ENCODE measurements at regions of chr11 and their contacts with region 1.

Region 1: GRCh38 chr11:102451681-102452460 is 694 bp downstream of the TMEM123 start:
- DNase-seq: peak; percentile 78 to 82 (median 82)
- H3K4me3 ChIP-seq: peak overlapping the region; percentile 83 to 94
- H3K4me3 Mint-ChIP-seq: peak overlapping the region; percentile 89 to 99 (median 98)
- H3K27ac ChIP-seq: peak overlapping the region; percentile 86
- H3K27ac Mint-ChIP-seq: peak overlapping the region; percentile 94 to 98 (median 97)
- H3K4me1 ChIP-seq: peaks cover 70% of the 10 kb centered on the region
- H3K4me1 Mint-ChIP-seq: peaks cover 63 to 93% (median 76%) of the 10 kb centered on the region in 4 donors
- H3K27me3 ChIP-seq: no peaks in the 10 kb centered on the region
- H3K27me3 Mint-ChIP-seq: no peaks in the 10 kb centered on the region

Region 2: DNA sequence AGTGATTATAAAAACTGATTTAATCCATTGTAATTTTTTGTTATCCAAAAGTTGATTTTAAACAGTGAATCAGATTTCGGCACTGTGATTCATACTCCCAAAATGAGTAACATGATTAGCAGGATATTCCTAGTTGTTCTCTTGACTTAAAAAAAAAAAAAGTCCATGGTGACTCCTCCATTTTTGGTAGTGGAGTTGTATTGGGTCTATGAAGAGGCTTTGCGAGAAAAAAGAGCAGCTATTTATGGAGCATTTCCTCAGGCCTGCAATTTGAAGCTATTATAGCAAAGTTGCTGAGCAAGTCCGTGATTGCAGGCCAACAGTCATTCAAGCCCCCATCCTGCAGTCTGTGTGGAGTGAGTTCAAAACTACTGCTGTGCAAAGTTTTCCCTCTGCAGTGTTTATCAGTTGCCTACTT is 312.8 kb before region 1 on chr11:
- CTCF ChIA-PET with region 1: no interaction called
- POLR2A ChIA-PET with region 1: no interaction called
- intact Hi-C with region 1: no loop called
- DNase-seq: no peak
- H3K4me3 ChIP-seq: no peak overlapping the region
- H3K4me3 Mint-ChIP-seq: no peak overlapping the region
- H3K27ac ChIP-seq: no peak overlapping the region
- H3K27ac Mint-ChIP-seq: no peak overlapping the region
- H3K4me1 ChIP-seq: no peaks in the 10 kb centered on the region
- H3K4me1 Mint-ChIP-seq: no peaks in the 10 kb centered on the region
- H3K27me3 ChIP-seq: no peaks in the 10 kb centered on the region
- H3K27me3 Mint-ChIP-seq: peaks cover 4 to 15% of the 10 kb centered on the region in 2 donors

Region 3: DNA sequence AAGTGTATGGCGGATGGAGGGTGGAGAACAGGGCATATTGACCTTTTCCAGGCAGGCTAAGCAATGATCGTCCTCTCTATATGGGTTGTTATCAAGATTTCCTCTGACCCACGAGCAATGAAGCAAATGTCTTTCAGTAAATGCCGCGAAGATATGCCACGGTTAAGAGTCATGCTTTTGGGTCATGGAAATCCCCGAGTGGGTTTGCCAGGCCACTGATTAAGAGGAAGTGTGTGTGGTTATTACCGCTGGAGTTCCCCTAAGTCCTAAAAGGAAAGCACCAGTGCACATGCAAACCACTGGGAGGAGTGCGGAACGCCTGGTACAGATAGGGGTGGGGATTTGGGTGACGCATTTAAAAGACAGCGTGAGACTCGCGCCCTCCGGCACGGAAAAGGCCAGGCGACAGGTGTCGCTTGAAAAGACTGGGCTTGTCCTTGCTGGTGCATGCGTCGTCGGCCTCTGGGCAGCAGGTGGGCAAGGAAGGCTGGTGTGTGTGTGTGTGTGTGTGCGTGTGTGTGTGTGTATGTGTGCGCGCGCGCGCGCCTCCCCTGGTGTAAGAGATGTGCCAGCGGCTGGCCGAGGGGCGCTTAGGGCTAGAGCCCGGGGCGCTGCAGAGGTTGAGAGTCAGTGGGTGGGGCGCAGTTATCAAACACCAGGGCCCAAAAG is 134.6 kb before region 1 on chr11 and contains the start of gene BIRC3:
- CTCF ChIA-PET with region 1: interaction called, 4 read pairs
- POLR2A ChIA-PET with region 1: interaction called, 10 read pairs
- intact Hi-C with region 1: loop called (anchors 1 kb)
- DNase-seq: peak; percentile 93 to 99 (median 96)
- H3K4me3 ChIP-seq: peak within 1 kb of the TSS; percentile 94 to 96
- H3K4me3 Mint-ChIP-seq: peak within 1 kb of the TSS; percentile 90 to 100 (median 96)
- H3K27ac ChIP-seq: peak within 1 kb of the TSS; percentile 95
- H3K27ac Mint-ChIP-seq: peak within 1 kb of the TSS; percentile 90 to 99 (median 99)
- H3K4me1 ChIP-seq: peaks cover 59% of the 10 kb centered on the region
- H3K4me1 Mint-ChIP-seq: peaks cover 46 to 81% (median 58%) of the 10 kb centered on the region in 4 donors
- H3K27me3 ChIP-seq: no peaks in the 10 kb centered on the region
- H3K27me3 Mint-ChIP-seq: no peaks in the 10 kb centered on the region
- total RNA-seq, gene BIRC3: 197 to 198 TPM

Region 4: GRCh38 chr11:102361086-102362031 is 90.5 kb before region 1 on chr11:
- CTCF ChIA-PET with region 1: interaction called, 6 read pairs
- POLR2A ChIA-PET with region 1: interaction called, 10 read pairs
- intact Hi-C with region 1: no loop called
- DNase-seq: peak; percentile 56 to 62 (median 58)
- H3K4me3 ChIP-seq: peak overlapping the region in 1 of 2 donors; percentile 33
- H3K4me3 Mint-ChIP-seq: peak overlapping the region; percentile 68 to 79 (median 74)
- H3K27ac ChIP-seq: peak overlapping the region; percentile 35
- H3K27ac Mint-ChIP-seq: peak overlapping the region; percentile 86 to 99 (median 93)
- H3K4me1 ChIP-seq: peaks cover 55% of the 10 kb centered on the region
- H3K4me1 Mint-ChIP-seq: peaks cover 41 to 76% (median 46%) of the 10 kb centered on the region in 4 donors
- H3K27me3 ChIP-seq: no peaks in the 10 kb centered on the region
- H3K27me3 Mint-ChIP-seq: no peaks in the 10 kb centered on the region

Region 5: DNA sequence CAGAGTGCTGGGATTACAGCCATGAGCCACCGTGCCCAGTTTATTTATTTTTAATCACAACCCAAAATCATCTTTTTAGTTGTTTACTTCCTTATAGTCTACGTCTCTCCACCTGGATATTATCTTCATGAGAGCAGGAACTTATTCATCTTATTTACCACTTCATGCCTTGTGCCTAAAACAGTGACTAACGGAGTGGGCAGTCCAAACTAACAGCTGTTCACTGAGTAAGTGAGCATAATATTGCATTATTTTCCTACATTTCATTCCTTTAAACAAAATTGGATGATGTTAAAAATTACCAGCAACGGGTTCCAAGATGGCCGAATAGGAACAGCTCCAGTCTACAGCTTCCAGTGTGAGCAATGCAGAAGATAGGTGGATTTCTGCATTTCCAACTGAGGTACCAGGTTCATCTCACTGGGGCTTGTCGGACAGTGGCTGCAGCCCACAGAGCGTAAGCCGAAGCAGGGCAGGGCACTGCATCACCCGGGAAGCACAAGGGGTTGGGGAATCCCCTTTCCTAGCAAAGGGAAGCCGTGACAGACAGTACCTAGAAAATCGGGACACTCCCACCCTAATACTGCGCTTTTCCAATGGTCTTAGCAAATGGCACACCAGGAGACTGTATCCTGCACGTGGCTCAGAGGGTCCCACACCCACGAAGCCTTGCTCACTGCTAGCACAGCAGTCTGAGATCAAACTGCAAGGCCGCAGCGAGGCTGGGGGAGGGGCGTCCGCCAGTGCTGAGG is 13.4 kb before region 1 on chr11:
- CTCF ChIA-PET with region 1: interaction called, 6 read pairs
- POLR2A ChIA-PET with region 1: interaction called, 10 read pairs
- intact Hi-C with region 1: loop called (anchors 1 kb)
- DNase-seq: no peak
- H3K4me3 ChIP-seq: no peak overlapping the region
- H3K4me3 Mint-ChIP-seq: peak overlapping the region; percentile 29 to 84 (median 59)
- H3K27ac ChIP-seq: peak overlapping the region; percentile 15
- H3K27ac Mint-ChIP-seq: peak overlapping the region; percentile 36 to 89 (median 75)
- H3K4me1 ChIP-seq: peaks cover 57% of the 10 kb centered on the region
- H3K4me1 Mint-ChIP-seq: peaks cover 58 to 88% (median 76%) of the 10 kb centered on the region in 4 donors
- H3K27me3 ChIP-seq: no peaks in the 10 kb centered on the region
- H3K27me3 Mint-ChIP-seq: no peaks in the 10 kb centered on the region

Region 6: GRCh38 chr11:102476812-102477211 is 24.9 kb after region 1 on chr11:
- CTCF ChIA-PET with region 1: interaction called, 8 read pairs
- POLR2A ChIA-PET with region 1: interaction called, 44 read pairs
- intact Hi-C with region 1: no loop called
- DNase-seq: peak; percentile 23 to 45 (median 24)
- H3K4me3 ChIP-seq: no peak overlapping the region
- H3K4me3 Mint-ChIP-seq: peak overlapping the region in 7 of 8 donors; percentile 44 to 72 (median 61)
- H3K27ac ChIP-seq: no peak overlapping the region
- H3K27ac Mint-ChIP-seq: peak overlapping the region; percentile 33 to 96 (median 91)
- H3K4me1 ChIP-seq: peaks cover 47% of the 10 kb centered on the region
- H3K4me1 Mint-ChIP-seq: peaks cover 29 to 62% (median 44%) of the 10 kb centered on the region in 4 donors
- H3K27me3 ChIP-seq: no peaks in the 10 kb centered on the region
- H3K27me3 Mint-ChIP-seq: no peaks in the 10 kb centered on the region

Measured in CD4-positive, alpha-beta memory T cell (primary cell).